Activated CD4-positive, alpha-beta memory T cell treated with anti-CD3 and anti-CD28 coated beads for 36 hours (primary cell): ENCODE measurements at regions of chr11 and their contacts with region 1.

Region 1: DNA sequence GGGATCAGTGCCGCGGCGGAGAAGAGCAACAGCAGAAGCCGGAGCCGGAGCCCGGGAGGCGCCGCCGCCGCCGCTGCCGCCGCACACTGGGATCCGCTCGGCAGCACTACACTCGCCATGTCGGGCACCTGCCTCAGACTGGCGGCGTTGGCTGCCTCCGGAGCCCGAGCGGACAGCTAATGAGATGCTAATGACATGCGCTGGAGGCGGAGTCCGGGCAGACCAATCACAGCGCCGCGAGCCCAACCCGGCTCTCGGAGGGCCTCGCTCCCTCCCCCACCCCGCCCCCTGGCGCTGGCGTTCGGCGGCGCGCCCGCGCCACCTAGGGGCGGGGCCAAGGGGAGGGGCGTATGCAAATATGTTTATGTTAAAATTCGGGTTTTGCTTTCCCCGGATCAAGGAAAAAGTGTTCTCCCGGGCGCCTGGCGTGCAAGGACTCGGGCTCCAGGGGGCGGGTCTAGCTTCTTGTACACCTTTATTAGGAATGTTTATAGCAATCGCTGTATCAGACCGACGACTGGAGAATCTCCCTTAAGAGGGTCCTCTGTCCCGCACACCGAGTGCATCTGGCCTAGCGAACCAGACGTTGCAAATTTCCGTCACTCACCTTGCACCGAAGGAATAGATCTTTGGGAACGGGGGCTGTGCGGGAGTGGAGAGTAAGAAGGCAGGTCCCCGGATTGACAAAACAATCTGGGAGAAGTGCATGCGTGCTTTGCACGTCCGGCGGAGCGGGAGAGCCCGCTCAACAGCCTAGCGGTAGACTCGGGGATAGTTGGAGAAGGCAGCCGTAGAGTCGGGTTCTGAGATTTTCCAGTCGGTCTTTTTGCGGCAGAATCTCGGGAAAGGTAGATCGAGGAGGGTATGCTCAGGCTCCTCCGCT is at the start of gene CADM1:
- DNase-seq: peak; percentile 88
- H3K4me3 Mint-ChIP-seq: peak within 1 kb of the TSS; percentile 75
- H3K27ac Mint-ChIP-seq: no peak within 1 kb of the TSS
- H3K4me1 Mint-ChIP-seq: peaks cover 10% of the 10 kb centered on the region
- H3K27me3 Mint-ChIP-seq: peaks cover 23% of the 10 kb centered on the region
- total RNA-seq, gene CADM1: 0.95 to 1.5 TPM

Region 2: DNA sequence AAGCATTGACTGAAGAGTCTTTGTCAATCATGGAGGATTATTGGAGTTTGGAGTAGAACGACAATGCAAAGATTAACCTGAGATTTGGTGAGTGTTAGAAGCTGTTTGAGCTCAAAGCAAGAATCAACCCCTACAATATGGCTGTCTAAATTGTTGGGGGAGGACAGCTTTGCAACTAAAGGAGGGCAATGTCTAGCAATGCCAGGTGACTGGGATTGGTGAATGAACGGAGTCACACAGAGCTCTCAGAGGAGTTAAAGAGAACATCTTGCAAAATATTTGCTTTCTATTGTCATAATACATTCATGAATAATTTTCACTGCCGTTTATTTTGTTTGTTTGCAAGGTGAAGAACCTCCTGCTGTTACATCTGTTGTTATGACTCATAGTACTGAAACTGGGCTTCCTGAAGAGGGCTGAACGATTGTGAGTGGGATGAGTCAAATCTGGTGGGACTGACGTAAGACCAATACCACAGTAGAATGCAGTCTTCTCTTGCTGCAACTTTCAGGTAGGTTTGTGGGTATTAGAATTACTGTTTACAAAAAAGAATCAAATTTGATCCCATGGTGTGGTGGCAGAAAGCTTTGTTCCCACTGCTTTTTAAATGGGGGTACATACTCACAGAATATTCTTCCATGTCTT is 282.2 kb before region 1 on chr11:
- CTCF ChIA-PET with region 1: no interaction called
- POLR2A ChIA-PET with region 1: no interaction called
- intact Hi-C with region 1: loop called (anchors 5 kb)
- DNase-seq: peak; percentile 63
- H3K4me3 Mint-ChIP-seq: no peak overlapping the region
- H3K27ac Mint-ChIP-seq: peak overlapping the region; percentile 23
- H3K4me1 Mint-ChIP-seq: peaks cover 35% of the 10 kb centered on the region
- H3K27me3 Mint-ChIP-seq: peaks cover 22% of the 10 kb centered on the region

Region 3: GRCh38 chr11:115334932-115335788 is 169.4 kb before region 1 on chr11:
- CTCF ChIA-PET with region 1: interaction called, 3 read pairs
- POLR2A ChIA-PET with region 1: no interaction called
- intact Hi-C with region 1: loop called (anchors 1 kb)
- DNase-seq: no peak
- H3K4me3 Mint-ChIP-seq: no peak overlapping the region
- H3K27ac Mint-ChIP-seq: no peak overlapping the region
- H3K4me1 Mint-ChIP-seq: no peaks in the 10 kb centered on the region
- H3K27me3 Mint-ChIP-seq: peaks cover 1% of the 10 kb centered on the region

Region 4: GRCh38 chr11:115384236-115384635 is 120.3 kb before region 1 on chr11:
- CTCF ChIA-PET with region 1: no interaction called
- POLR2A ChIA-PET with region 1: no interaction called
- intact Hi-C with region 1: loop called (anchors 5 kb)
- DNase-seq: no peak
- H3K4me3 Mint-ChIP-seq: no peak overlapping the region
- H3K27ac Mint-ChIP-seq: no peak overlapping the region
- H3K4me1 Mint-ChIP-seq: no peaks in the 10 kb centered on the region
- H3K27me3 Mint-ChIP-seq: peaks cover 3% of the 10 kb centered on the region

Region 5: GRCh38 chr11:115585361-115586024 is 81.0 kb after region 1 on chr11:
- CTCF ChIA-PET with region 1: no interaction called
- POLR2A ChIA-PET with region 1: no interaction called
- intact Hi-C with region 1: loop called (anchors 1 kb)
- DNase-seq: peak; percentile 41
- H3K4me3 Mint-ChIP-seq: no peak overlapping the region
- H3K27ac Mint-ChIP-seq: no peak overlapping the region
- H3K4me1 Mint-ChIP-seq: no peaks in the 10 kb centered on the region
- H3K27me3 Mint-ChIP-seq: peaks cover 1% of the 10 kb centered on the region

Region 6: DNA sequence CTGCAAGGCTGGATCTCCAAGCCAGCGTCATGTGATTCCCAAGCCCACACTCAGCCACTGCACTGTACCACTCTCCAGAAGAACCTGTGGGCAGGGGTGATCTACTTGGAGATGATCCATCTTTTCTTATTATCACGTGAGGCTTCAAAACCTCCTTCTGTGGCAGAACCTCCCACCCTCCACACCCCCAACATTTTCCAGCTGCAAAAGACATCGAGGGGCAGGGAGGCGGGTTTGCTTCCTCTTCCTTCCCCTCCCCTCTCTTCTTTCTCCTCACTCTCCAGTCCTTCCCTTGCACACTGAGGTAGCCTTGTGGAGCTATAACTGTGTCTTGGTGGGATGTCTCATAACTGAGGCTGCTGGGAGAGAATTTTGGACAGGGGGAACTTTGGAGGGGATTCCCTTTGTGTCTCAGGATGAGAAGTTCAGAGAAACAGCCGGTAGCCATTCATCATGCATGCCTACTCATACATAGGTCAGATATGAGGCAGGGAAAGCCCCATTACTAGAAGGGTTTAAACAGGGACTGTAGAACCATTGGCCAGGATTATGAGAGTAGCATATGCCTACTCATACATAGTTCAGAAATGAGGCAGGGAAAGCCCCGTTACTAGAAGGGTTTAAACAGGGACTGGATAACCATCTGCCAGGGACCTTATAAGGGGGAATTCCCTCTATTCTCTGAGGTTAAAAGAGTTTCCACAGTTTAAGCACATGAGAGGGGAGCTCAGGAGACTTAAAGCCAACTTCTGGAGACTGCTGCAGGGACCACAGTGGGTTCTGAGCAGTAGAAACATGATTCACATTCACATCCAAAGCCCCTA is 420.4 kb after region 1 on chr11:
- CTCF ChIA-PET with region 1: no interaction called
- POLR2A ChIA-PET with region 1: no interaction called
- intact Hi-C with region 1: loop called (anchors 1 kb)
- DNase-seq: peak; percentile 56
- H3K4me3 Mint-ChIP-seq: no peak overlapping the region
- H3K27ac Mint-ChIP-seq: no peak overlapping the region
- H3K4me1 Mint-ChIP-seq: peaks cover 16% of the 10 kb centered on the region
- H3K27me3 Mint-ChIP-seq: peaks cover 15% of the 10 kb centered on the region